Prostate gland (tissue), 2 donors: ENCODE measurements at regions of chr15 and their contacts with region 1.

Region 1: GRCh38 chr15:78077058-78077877 is at the start of gene TBC1D2B:
- DNase-seq: peak; percentile 60
- H3K4me3 ChIP-seq: peak within 1 kb of the TSS; percentile 74 to 87
- H3K27ac ChIP-seq: peak within 1 kb of the TSS; percentile 86 to 89
- H3K4me1 ChIP-seq: peaks cover 28% of the 10 kb centered on the region
- H3K27me3 ChIP-seq: no peaks in the 10 kb centered on the region
- CTCF ChIP-seq: peak in 3 of 4 experiments; percentile 2 to 19 (median 13)
- POLR2A ChIP-seq: no peak
- total RNA-seq, gene TBC1D2B: 21.5 to 49.5 TPM

Region 2: GRCh38 chr15:78004919-78005634 is 72.2 kb before region 1 on chr15:
- intact Hi-C with region 1: loop called (anchors 5 kb)
- DNase-seq: peak; percentile 87
- H3K4me3 ChIP-seq: no peak overlapping the region
- H3K27ac ChIP-seq: peak overlapping the region; percentile 70 to 75
- H3K4me1 ChIP-seq: peaks cover 48% of the 10 kb centered on the region
- H3K27me3 ChIP-seq: no peaks in the 10 kb centered on the region
- CTCF ChIP-seq: peak in 2 of 4 experiments; percentile 25 to 27
- POLR2A ChIP-seq: no peak

Region 3: DNA sequence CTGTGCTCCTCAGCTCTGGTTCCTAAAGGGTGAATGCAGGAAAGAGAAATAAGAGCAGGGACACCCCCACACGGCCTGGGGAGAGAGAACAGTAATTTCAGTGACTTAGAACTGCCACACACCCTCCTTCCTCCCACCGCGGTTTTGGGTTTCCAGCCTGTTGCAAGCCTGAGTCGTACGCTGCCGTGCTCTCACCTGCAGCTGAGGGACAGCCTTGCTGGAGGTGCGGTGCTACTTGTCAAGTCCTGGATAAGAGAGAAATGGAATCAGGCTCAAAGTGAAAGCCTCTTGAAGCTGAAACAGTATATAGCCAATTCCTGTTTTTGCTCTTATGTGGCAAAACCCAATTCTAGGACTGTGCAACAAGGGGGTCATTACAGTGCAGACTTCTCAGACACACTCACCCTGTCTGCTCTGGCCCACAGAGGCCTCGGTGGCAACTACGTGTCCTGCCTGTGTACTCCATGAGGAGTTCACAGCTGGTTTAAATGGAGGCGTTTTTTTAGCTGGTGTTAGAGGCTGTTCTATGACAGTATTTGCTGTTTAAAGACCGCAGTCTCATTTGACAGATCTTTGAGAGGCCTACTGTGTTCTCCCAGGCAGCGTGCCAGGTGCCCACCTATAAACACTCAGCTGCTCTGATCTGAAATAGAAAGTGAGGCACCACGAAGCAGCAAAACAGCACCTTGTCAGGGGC is 42.6 kb before region 1 on chr15:
- intact Hi-C with region 1: loop called (anchors 5 kb)
- DNase-seq: peak; percentile 63
- H3K4me3 ChIP-seq: no peak overlapping the region
- H3K27ac ChIP-seq: peak overlapping the region; percentile 64 to 71
- H3K4me1 ChIP-seq: peaks cover 20% of the 10 kb centered on the region
- H3K27me3 ChIP-seq: no peaks in the 10 kb centered on the region
- CTCF ChIP-seq: no peak
- POLR2A ChIP-seq: no peak

Region 4: DNA sequence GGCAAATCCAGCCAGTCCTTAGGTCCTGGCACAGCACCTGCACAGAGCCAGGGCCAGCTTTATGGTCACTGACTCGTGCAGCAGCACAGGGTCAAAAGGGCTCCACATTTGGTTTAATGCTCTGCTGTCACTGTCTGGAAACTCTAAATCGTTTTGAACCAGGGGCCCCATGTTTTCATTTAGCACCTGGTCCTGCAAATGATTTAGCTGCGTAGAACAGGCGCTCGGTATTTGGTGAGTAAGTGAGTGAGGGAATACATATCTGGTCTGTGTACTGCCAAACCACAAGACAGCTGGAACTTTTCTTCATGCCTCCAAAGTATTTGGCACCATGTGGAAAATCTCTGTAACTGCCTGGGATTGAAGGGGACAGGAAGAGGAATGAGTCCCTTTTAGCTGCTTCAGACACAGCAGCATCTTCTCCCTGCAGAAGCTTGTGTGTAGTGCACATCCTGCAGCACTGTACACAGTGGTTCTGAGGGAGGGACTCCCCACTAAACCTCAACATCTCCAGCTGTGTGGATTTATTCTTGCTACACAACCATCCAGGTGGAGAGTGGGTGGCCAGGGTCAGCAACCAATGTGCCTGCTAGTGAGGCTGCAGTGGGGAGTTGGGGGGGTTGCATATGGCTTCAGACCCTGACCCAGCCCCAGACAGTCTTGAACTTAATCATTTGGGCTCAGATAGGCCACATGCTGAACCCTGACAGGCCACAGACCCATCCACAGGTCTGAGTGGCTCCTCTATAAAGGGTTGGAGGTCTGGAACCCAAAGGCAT is 16.2 kb after region 1 on chr15:
- intact Hi-C with region 1: no loop called
- DNase-seq: no peak
- H3K4me3 ChIP-seq: no peak overlapping the region
- H3K27ac ChIP-seq: no peak overlapping the region
- H3K4me1 ChIP-seq: no peaks in the 10 kb centered on the region
- H3K27me3 ChIP-seq: no peaks in the 10 kb centered on the region
- CTCF ChIP-seq: no peak
- POLR2A ChIP-seq: no peak

Region 5: GRCh38 chr15:78182821-78183220 is 105.6 kb after region 1 on chr15:
- intact Hi-C with region 1: no loop called
- DNase-seq: no peak
- H3K4me3 ChIP-seq: no peak overlapping the region
- H3K27ac ChIP-seq: no peak overlapping the region
- H3K4me1 ChIP-seq: no peaks in the 10 kb centered on the region
- H3K27me3 ChIP-seq: no peaks in the 10 kb centered on the region
- CTCF ChIP-seq: no peak
- POLR2A ChIP-seq: no peak